Common myeloid progenitor, CD34-positive (primary cell): ENCODE measurements at regions of chr2 and their contacts with region 1.

Region 1: DNA sequence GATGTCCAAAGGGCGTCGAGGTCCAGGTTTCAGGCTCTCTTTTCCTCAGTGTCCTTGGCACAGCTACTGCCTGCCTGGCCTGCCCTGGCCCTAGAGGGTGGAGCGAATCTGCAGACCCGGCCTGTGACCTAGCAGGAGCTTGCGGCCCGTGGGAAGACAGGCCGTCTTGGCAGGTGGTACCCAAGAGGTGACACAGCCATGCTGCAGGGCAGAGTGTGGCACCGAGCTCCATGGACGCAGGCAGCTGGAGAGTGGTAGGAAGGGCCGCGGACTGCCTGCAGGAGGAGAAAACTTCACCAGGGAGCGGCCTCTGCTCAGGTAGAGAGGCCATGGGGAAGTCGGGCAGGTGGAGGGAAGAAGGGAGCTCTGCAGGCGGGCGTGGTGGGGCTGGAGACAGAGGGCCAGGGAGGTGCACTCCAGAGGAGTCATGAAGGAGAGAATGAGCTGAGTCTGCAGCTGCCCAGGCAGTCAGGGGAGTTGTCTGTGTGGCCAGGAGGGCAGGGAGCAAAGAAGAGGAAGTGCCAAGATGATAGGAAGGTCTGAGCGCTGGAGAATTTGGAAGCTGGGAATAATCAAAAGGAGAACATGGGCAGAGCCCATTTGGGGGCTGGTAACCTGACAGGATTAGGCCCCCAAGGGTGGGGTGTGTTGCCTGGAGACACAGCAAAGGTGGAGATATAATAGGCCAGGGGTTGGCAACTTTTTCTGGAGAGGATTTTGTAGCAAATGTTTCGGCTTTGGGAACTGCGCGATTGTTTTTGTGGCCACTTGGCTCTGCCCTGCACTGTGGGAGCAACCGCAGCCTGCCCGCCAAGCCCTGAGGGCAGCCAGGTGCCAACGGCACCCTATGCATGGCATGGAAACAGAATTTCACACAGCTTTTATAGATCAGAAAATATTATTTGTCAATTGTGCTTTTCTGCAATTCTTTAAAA is 154.4 kb upstream of the PXDN start:
- DNase-seq: no peak
- H3K4me3 ChIP-seq: no peak overlapping the region
- H3K27ac ChIP-seq: no peak overlapping the region
- H3K4me1 ChIP-seq: no peaks in the 10 kb centered on the region
- H3K27me3 ChIP-seq: no peaks in the 10 kb centered on the region

Region 2: GRCh38 chr2:1874101-1874865 is 24.4 kb before region 1 on chr2:
- CTCF ChIA-PET with region 1: no interaction called
- POLR2A ChIA-PET with region 1: no interaction called
- DNase-seq: no peak
- H3K4me3 ChIP-seq: no peak overlapping the region
- H3K27ac ChIP-seq: no peak overlapping the region
- H3K4me1 ChIP-seq: peaks cover 0 to 6% (median 2%) of the 10 kb centered on the region in 4 experiments
- H3K27me3 ChIP-seq: peaks cover 0 to 28% (median 2%) of the 10 kb centered on the region in 5 experiments

Region 3: DNA sequence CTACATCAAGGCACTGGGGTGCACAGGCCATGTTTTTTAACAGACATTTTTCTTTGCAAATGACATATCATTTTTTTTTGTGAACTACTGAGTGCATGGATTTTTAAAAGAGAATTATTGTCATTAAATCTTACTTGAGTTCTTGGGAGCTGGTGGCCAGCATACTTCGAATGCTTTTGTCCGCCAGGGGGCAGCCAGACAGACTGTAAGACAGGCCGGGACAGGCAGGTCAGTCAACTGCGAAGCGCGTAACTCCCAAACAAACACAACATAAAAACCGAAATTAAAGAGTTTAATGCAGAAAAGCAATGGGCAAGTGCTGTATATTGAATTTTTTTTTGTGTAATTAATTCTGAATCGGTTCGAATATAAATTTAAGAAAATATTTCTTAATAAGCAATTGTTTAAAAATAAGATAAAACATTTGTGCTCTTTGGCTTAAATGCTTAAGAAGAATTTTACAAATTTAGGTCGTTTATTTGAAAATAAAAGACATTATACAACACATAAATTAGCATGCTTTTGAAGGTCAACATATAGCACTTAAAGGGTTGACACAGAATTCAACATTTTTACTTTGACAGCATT is 12.2 kb before region 1 on chr2:
- CTCF ChIA-PET with region 1: interaction called, 12 read pairs
- POLR2A ChIA-PET with region 1: no interaction called
- DNase-seq: peak; percentile 65 to 82 (median 78)
- H3K4me3 ChIP-seq: no peak overlapping the region
- H3K27ac ChIP-seq: no peak overlapping the region
- H3K4me1 ChIP-seq: peaks cover 0 to 2% (median 0%) of the 10 kb centered on the region in 4 experiments
- H3K27me3 ChIP-seq: peaks cover 0 to 8% (median 0%) of the 10 kb centered on the region in 5 experiments

Region 4: DNA sequence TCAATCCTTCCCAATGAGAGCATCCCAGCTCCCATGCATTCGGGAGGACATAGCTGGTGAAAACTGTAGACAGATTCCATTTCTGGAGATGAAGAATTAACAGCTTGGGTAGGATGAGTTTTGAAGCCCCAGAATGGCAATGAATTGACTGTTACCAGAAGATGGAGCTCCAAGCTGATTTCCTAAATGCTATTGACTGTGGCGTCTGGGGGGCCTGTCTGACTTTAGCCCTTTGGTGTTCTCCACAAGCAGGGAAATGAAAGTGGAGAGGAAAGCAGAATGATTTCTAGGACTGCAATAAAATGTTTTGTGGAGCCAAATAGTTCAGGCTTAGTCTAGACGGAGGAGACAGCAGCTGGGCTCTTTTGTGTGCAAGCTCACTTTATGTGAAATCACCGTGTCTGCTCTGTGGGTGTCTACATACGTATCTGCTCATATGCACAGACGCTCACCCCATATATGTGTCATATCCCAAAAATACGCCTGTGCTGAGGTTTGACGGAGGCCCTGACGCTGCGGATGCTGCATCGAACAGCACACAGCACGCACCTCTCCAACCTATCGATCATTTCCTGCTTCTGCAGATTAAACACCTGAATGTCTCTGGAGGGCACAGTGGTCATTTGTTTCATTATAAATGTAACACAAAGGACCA is 12.0 kb after region 1 on chr2:
- CTCF ChIA-PET with region 1: interaction called, 24 read pairs
- POLR2A ChIA-PET with region 1: no interaction called
- DNase-seq: peak; percentile 34 to 65 (median 64)
- H3K4me3 ChIP-seq: peak overlapping the region in 3 of 7 experiments; percentile 7 to 64 (median 31)
- H3K27ac ChIP-seq: no peak overlapping the region
- H3K4me1 ChIP-seq: peaks cover 0 to 20% (median 5%) of the 10 kb centered on the region in 4 experiments
- H3K27me3 ChIP-seq: peaks cover 0 to 3% (median 0%) of the 10 kb centered on the region in 5 experiments